ENCODE measurements at regions of chr10 and their contacts with region 1.

Region 1: DNA sequence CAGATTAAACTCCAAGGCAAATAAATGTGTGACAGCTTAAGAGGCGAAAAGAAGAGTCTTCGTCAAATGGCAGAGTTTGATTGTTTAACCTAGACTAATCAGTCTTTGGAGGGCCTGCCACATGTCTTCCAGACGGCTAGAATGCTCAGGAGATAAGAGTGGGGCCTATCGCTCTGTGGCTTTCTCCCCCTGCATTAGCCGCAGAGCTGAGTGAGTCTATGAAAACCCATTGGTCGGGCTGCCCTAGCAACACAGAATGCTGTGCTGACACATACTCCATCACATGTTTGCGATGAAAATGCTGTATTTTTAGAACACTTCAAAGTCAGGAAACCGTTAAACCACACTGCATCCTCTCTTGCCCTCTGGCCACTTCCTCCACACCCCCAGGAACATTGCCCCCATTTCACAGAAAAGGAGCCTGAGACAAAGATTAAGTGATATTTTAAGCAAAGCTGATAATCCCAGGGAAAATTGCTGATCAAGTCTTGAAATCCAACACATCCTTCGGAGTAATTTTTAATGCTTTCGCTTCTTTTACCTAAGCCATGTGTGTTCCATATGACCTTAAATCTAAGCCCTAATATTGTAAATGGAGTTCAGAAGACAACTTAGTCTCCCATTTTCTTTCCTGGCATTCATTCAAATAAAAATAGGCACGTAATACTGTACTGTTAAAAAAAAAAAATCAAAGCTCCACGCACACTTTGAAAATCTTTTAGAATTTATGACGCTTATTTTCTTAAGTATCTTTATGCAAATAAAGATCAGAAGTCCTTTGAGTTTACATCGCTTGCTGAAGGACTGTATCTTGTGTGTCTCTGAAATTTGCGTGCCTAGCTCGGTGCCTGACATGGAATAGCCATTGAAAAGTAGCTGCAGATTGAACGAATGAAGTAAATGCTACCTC is 161.2 kb downstream of the CELF2 start:
- DNase-seq: peak; percentile 94
- ATAC-seq: peak; percentile 76
- H3K4me3 Mint-ChIP-seq: no peak overlapping the region
- H3K27ac Mint-ChIP-seq: no peak overlapping the region
- H3K4me1 Mint-ChIP-seq: peaks cover 99% of the 10 kb centered on the region
- H3K27me3 Mint-ChIP-seq: no peaks in the 10 kb centered on the region

Region 2: DNA sequence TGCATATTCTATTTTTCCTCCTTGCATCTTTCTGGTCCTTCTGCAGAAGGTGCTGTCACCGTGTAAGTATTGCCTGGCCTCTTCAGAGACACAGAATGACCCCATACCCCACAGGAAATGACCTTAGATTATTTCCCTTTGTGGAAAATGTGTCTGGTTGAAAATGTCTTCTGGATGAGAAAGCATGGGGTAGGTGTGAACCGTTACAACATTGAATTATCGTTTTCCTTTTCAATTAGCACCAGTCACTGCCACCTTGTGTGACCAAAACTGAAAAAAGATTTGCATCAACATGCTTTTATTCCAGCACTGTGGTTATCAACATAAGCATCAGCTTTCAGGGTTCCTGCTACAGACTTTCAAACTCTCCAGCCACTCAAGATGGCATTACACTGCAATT is 219.2 kb before region 1 on chr10:
- CTCF ChIA-PET with region 1: no interaction called
- POLR2A ChIA-PET with region 1: no interaction called
- DNase-seq: no peak
- ATAC-seq: no peak
- H3K4me3 Mint-ChIP-seq: no peak overlapping the region
- H3K27ac Mint-ChIP-seq: no peak overlapping the region
- H3K4me1 Mint-ChIP-seq: no peaks in the 10 kb centered on the region
- H3K27me3 Mint-ChIP-seq: peaks cover 13% of the 10 kb centered on the region

Region 3: GRCh38 chr10:11045995-11046775 is 132.7 kb before region 1 on chr10:
- CTCF ChIA-PET with region 1: no interaction called
- POLR2A ChIA-PET with region 1: no interaction called
- DNase-seq: no peak
- ATAC-seq: no peak
- H3K4me3 Mint-ChIP-seq: no peak overlapping the region
- H3K27ac Mint-ChIP-seq: no peak overlapping the region
- H3K4me1 Mint-ChIP-seq: no peaks in the 10 kb centered on the region
- H3K27me3 Mint-ChIP-seq: peaks cover 43% of the 10 kb centered on the region

Region 4: GRCh38 chr10:11113156-11113555 is 65.7 kb before region 1 on chr10:
- CTCF ChIA-PET with region 1: interaction called, 19 read pairs
- POLR2A ChIA-PET with region 1: interaction called, 6 read pairs
- DNase-seq: peak; percentile 51
- ATAC-seq: peak; percentile 95
- H3K4me3 Mint-ChIP-seq: no peak overlapping the region
- H3K27ac Mint-ChIP-seq: no peak overlapping the region
- H3K4me1 Mint-ChIP-seq: peaks cover 10% of the 10 kb centered on the region
- H3K27me3 Mint-ChIP-seq: no peaks in the 10 kb centered on the region

Region 5: GRCh38 chr10:11165591-11166543 is 13.0 kb before region 1 on chr10:
- CTCF ChIA-PET with region 1: interaction called, 163 read pairs
- POLR2A ChIA-PET with region 1: interaction called, 1,291 read pairs
- DNase-seq: peak; percentile 88
- ATAC-seq: peak; percentile 65
- H3K4me3 Mint-ChIP-seq: no peak overlapping the region
- H3K27ac Mint-ChIP-seq: peak overlapping the region; percentile 96
- H3K4me1 Mint-ChIP-seq: peaks cover 32% of the 10 kb centered on the region
- H3K27me3 Mint-ChIP-seq: no peaks in the 10 kb centered on the region

Region 6: DNA sequence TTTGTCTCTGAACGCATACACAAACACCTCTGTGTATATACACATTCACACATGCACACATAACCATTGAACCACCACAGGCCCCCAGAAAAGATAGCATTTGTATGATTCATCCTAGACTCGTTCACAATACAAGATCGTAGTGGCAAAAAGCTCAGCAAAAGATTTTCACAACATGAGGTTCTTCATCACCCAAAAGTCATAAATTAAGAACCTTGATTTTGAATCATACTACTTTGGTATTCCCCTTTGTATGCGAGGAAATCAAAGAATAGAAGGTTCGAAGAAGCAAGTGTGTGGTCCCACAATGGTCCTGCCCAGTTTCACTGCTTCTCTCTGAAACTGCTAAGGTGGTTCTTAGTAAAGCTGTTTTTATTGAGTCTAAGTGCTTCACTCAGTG is 39.5 kb after region 1 on chr10:
- CTCF ChIA-PET with region 1: interaction called, 3 read pairs
- POLR2A ChIA-PET with region 1: interaction called, 12 read pairs
- DNase-seq: no peak
- ATAC-seq: peak; percentile 37
- H3K4me3 Mint-ChIP-seq: no peak overlapping the region
- H3K27ac Mint-ChIP-seq: peak overlapping the region; percentile 43
- H3K4me1 Mint-ChIP-seq: peaks cover 89% of the 10 kb centered on the region
- H3K27me3 Mint-ChIP-seq: no peaks in the 10 kb centered on the region

Region 7: GRCh38 chr10:11236234-11236633 is 57.4 kb after region 1 on chr10:
- CTCF ChIA-PET with region 1: interaction called, 4 read pairs
- POLR2A ChIA-PET with region 1: interaction called, 20 read pairs
- DNase-seq: peak; percentile 58
- ATAC-seq: peak; percentile 85
- H3K4me3 Mint-ChIP-seq: peak overlapping the region; percentile 26
- H3K27ac Mint-ChIP-seq: peak overlapping the region; percentile 43
- H3K4me1 Mint-ChIP-seq: peaks cover 87% of the 10 kb centered on the region
- H3K27me3 Mint-ChIP-seq: no peaks in the 10 kb centered on the region